Caco-2 (cell line): ENCODE measurements at regions of chr20 and their contacts with region 1.

Region 1: DNA sequence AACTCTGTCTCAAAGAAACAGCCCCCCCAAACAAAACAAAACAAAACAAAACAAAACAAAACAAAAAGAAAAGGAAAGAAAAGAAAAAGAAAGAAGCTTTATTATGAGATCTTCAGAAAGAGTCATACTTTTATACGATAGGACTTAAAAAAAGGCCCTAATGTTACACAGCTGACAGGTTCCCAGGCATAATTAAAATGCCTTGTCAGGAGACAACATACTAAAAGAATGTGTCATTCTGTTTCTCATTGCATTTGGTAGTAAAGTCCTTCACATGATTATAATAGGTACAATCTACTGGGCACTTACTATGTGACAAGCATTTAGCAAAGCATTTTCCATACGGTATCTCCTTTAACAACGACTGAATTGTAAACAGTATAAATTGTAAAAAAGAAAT is 36.4 kb upstream of the RPN2 start:
- DNase-seq: no peak
- H3K4me3 ChIP-seq: no peak overlapping the region
- H3K4me3 Mint-ChIP-seq: no peak overlapping the region
- H3K27ac Mint-ChIP-seq: peak overlapping the region; percentile 29
- H3K4me1 ChIP-seq: peaks cover 7% of the 10 kb centered on the region; the same call in 1 of the 2 replicates
- H3K4me1 Mint-ChIP-seq: peaks cover 7% of the 10 kb centered on the region
- H3K27me3 ChIP-seq: no peaks in the 10 kb centered on the region
- H3K27me3 Mint-ChIP-seq: peaks cover 2% of the 10 kb centered on the region
- CTCF ChIP-seq: no peak

Region 2: GRCh38 chr20:37095599-37096414 is 46.9 kb before region 1 on chr20 and contains the start of gene RBL1:
- CTCF ChIA-PET with region 1: no interaction called
- POLR2A ChIA-PET with region 1: interaction called, 20 read pairs
- intact Hi-C with region 1: no loop called
- DNase-seq: peak; percentile 96
- H3K4me3 ChIP-seq: peak within 1 kb of the TSS; percentile 75
- H3K4me3 Mint-ChIP-seq: peak within 1 kb of the TSS; percentile 91
- H3K27ac Mint-ChIP-seq: peak within 1 kb of the TSS; percentile 95
- H3K4me1 ChIP-seq: peaks cover 12% of the 10 kb centered on the region
- H3K4me1 Mint-ChIP-seq: peaks cover 20% of the 10 kb centered on the region
- H3K27me3 ChIP-seq: no peaks in the 10 kb centered on the region
- H3K27me3 Mint-ChIP-seq: no peaks in the 10 kb centered on the region
- CTCF ChIP-seq: peak; percentile 28 to 70
- total RNA-seq, gene RBL1: 35.9 and 37.0 TPM in 2 replicates